ENCODE measurements at regions of chr4 and their contacts with region 1.

Region 1: GRCh38 chr4:77095101-77095821 is 19.5 kb upstream of the CCNI start:
- DNase-seq: peak; percentile 89
- ATAC-seq: peak; percentile 100
- H3K4me3 Mint-ChIP-seq: no peak overlapping the region
- H3K27ac Mint-ChIP-seq: no peak overlapping the region
- H3K4me1 Mint-ChIP-seq: peaks cover 11% of the 10 kb centered on the region
- H3K27me3 Mint-ChIP-seq: no peaks in the 10 kb centered on the region
- CTCF ChIP-seq: peak; percentile 85

Region 2: GRCh38 chr4:77065382-77065781 is 29.9 kb before region 1 on chr4:
- CTCF ChIA-PET with region 1: interaction called, 14 read pairs
- POLR2A ChIA-PET with region 1: interaction called, 7 read pairs
- intact Hi-C with region 1: no loop called
- DNase-seq: no peak
- ATAC-seq: no peak
- H3K4me3 Mint-ChIP-seq: no peak overlapping the region
- H3K27ac Mint-ChIP-seq: peak overlapping the region; percentile 20
- H3K4me1 Mint-ChIP-seq: peaks cover 36% of the 10 kb centered on the region
- H3K27me3 Mint-ChIP-seq: no peaks in the 10 kb centered on the region
- CTCF ChIP-seq: no peak

Region 3: DNA sequence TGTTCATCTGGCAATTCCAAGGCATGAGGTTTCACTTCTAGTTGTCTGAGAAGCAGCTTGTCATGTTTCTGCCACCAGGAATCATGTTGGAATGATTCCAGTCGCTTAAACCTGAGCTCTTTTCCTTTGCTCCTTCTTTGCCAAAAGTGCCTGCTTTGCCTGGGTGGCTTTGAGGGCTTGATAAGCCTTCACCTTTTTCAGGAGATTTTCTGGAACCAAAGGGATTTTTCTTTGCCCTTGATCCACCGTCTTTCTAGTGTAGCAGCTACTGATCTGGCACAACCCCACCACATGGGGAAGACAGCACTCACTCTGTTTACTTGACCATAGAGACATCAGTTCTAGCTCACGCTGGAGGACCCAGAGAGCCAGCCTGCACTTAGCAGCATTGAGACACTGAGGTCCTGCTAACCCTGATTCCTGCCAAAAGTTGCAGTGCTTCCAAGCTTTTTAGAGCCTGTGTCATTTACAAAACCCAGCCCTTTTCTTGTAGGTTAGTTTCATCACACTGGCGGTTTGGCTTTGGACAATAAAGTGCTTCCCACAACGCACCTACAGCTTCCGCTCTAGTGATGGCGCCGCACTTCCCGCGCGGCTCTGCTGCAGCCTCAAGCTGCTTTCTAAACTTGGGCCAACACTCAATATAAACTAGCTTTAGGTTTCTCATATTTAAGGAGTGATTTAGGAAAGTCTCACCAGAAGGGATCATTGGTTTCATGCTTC is 12.2 kb before region 1 on chr4:
- CTCF ChIA-PET with region 1: interaction called, 39 read pairs
- POLR2A ChIA-PET with region 1: interaction called, 3 read pairs
- intact Hi-C with region 1: no loop called
- DNase-seq: no peak
- ATAC-seq: no peak
- H3K4me3 Mint-ChIP-seq: no peak overlapping the region
- H3K27ac Mint-ChIP-seq: no peak overlapping the region
- H3K4me1 Mint-ChIP-seq: peaks cover 20% of the 10 kb centered on the region
- H3K27me3 Mint-ChIP-seq: no peaks in the 10 kb centered on the region
- CTCF ChIP-seq: no peak

Region 4: GRCh38 chr4:77132652-77133312 is 37.5 kb after region 1 on chr4:
- CTCF ChIA-PET with region 1: interaction called, 13 read pairs
- POLR2A ChIA-PET with region 1: no interaction called
- intact Hi-C with region 1: no loop called
- DNase-seq: no peak
- ATAC-seq: no peak
- H3K4me3 Mint-ChIP-seq: no peak overlapping the region
- H3K27ac Mint-ChIP-seq: no peak overlapping the region
- H3K4me1 Mint-ChIP-seq: peaks cover 5% of the 10 kb centered on the region
- H3K27me3 Mint-ChIP-seq: no peaks in the 10 kb centered on the region
- CTCF ChIP-seq: no peak

Region 5: GRCh38 chr4:77156533-77156911 is 61.3 kb after region 1 on chr4:
- CTCF ChIA-PET with region 1: interaction called, 18 read pairs
- POLR2A ChIA-PET with region 1: no interaction called
- intact Hi-C with region 1: no loop called
- DNase-seq: peak; percentile 97
- ATAC-seq: peak; percentile 92
- H3K4me3 Mint-ChIP-seq: peak overlapping the region; percentile 93
- H3K27ac Mint-ChIP-seq: peak overlapping the region; percentile 97
- H3K4me1 Mint-ChIP-seq: peaks cover 33% of the 10 kb centered on the region
- H3K27me3 Mint-ChIP-seq: no peaks in the 10 kb centered on the region
- CTCF ChIP-seq: no peak